Activated T-helper 2 cell treated with anti-CD3 and anti-CD28 coated beads, Interferon-gamma antibody, Interleukin-2, Interleukin-4, amounts not matched to agents 10 μg/mL and 5 μg/mL and 100 μg/mL, durations not matched to agents 14 hours and 24 hours and 36 hours (primary cell): ENCODE measurements at regions of chr9 and their contacts with region 1.

Region 1: GRCh38 chr9:2764353-2764752 is 47.0 kb downstream of the KCNV2 start:
- DNase-seq: peak; percentile 55
- H3K4me3 Mint-ChIP-seq: no peak overlapping the region
- H3K27ac Mint-ChIP-seq: peak overlapping the region; percentile 91
- H3K4me1 Mint-ChIP-seq: peaks cover 33% of the 10 kb centered on the region
- H3K27me3 Mint-ChIP-seq: no peaks in the 10 kb centered on the region

Region 2: DNA sequence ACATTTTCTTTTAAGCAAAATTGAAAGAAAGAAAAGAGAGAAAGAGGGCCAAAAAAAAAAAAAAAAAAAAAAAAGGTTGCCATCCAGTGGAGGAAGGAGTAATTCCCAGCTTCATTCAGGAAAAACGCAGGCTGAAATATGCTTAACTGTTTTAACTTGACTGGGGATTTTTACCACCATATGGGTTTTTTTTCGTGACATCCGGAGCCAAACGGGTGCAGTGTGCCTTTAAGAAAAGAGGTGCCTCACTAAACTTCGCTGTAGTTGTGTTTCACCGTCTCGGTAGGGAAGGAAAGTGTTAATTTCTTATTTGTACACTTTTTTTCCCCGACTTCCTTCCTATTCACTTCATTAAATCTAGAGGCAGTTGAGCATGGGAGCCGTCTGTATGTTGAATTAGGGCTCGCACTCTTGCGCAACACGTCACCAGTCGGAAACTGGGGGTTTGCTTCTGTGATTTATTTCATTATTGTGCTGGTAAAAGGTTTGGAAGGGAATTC is 606.2 kb before region 1 on chr9:
- intact Hi-C with region 1: loop called (anchors 1 kb)
- DNase-seq: peak; percentile 25
- H3K4me3 Mint-ChIP-seq: peak overlapping the region; percentile 94
- H3K27ac Mint-ChIP-seq: peak overlapping the region; percentile 98
- H3K4me1 Mint-ChIP-seq: peaks cover 43% of the 10 kb centered on the region
- H3K27me3 Mint-ChIP-seq: no peaks in the 10 kb centered on the region

Region 3: GRCh38 chr9:2620919-2621679 is 143.3 kb before region 1 on chr9:
- intact Hi-C with region 1: loop called (anchors 1 kb)
- DNase-seq: peak; percentile 47
- H3K4me3 Mint-ChIP-seq: peak overlapping the region; percentile 87
- H3K27ac Mint-ChIP-seq: peak overlapping the region; percentile 83
- H3K4me1 Mint-ChIP-seq: peaks cover 27% of the 10 kb centered on the region
- H3K27me3 Mint-ChIP-seq: peaks cover 30% of the 10 kb centered on the region

Region 4: GRCh38 chr9:2798423-2798822 is 34.1 kb after region 1 on chr9:
- intact Hi-C with region 1: loop called (anchors 5 kb)
- DNase-seq: no peak
- H3K4me3 Mint-ChIP-seq: no peak overlapping the region
- H3K27ac Mint-ChIP-seq: peak overlapping the region; percentile 62
- H3K4me1 Mint-ChIP-seq: peaks cover 19% of the 10 kb centered on the region
- H3K27me3 Mint-ChIP-seq: no peaks in the 10 kb centered on the region

Region 5: GRCh38 chr9:2816476-2817141 is 52.3 kb after region 1 on chr9:
- intact Hi-C with region 1: loop called (anchors 2 kb)
- DNase-seq: no peak
- H3K4me3 Mint-ChIP-seq: no peak overlapping the region
- H3K27ac Mint-ChIP-seq: peak overlapping the region; percentile 50
- H3K4me1 Mint-ChIP-seq: peaks cover 18% of the 10 kb centered on the region
- H3K27me3 Mint-ChIP-seq: no peaks in the 10 kb centered on the region

Region 6: GRCh38 chr9:2849941-2850340 is 85.6 kb after region 1 on chr9:
- intact Hi-C with region 1: loop called (anchors 2 kb)
- DNase-seq: no peak
- H3K4me3 Mint-ChIP-seq: no peak overlapping the region
- H3K27ac Mint-ChIP-seq: peak overlapping the region; percentile 18
- H3K4me1 Mint-ChIP-seq: peaks cover 12% of the 10 kb centered on the region
- H3K27me3 Mint-ChIP-seq: peaks cover 3% of the 10 kb centered on the region